A673 (cell line): ENCODE measurements at regions of chr10 and their contacts with region 1.

Region 1: DNA sequence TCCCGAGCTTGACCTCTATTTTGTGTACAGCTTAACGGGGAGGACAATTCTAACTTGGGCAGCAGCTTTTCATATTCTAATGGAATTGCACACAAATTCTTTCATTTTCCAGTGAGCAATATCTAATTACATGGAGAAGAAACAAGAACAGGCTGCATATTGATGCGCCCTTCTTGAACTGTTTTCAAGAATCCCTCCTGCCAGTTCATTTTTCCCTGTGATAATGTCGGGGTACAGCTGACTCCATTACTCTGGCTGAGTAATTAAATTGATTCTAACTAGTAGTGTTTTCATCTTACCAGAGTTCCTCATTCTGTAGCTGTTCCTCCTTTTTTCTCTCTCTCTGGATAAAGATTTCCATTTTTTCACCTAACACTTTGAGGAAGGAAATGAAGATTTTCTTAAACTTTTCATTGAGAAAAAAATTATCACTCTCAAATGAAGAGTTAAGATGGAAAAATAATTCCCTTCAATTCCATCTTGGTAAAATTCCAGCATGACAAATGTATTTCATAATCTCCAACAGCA is 190.9 kb downstream of the FANK1 start:
- DNase-seq: no peak
- H3K4me3 ChIP-seq: no peak overlapping the region
- H3K27ac ChIP-seq: no peak overlapping the region
- H3K4me1 ChIP-seq: no peaks in the 10 kb centered on the region
- H3K27me3 ChIP-seq: no peaks in the 10 kb centered on the region
- CTCF ChIP-seq: no peak

Region 2: GRCh38 chr10:126101801-126102200 is 14.6 kb after region 1 on chr10:
- CTCF ChIA-PET with region 1: no interaction called
- POLR2A ChIA-PET with region 1: interaction called, 13 read pairs
- intact Hi-C with region 1: no loop called
- DNase-seq: no peak
- H3K4me3 ChIP-seq: no peak overlapping the region
- H3K27ac ChIP-seq: no peak overlapping the region
- H3K4me1 ChIP-seq: no peaks in the 10 kb centered on the region
- H3K27me3 ChIP-seq: no peaks in the 10 kb centered on the region
- CTCF ChIP-seq: no peak

Region 3: DNA sequence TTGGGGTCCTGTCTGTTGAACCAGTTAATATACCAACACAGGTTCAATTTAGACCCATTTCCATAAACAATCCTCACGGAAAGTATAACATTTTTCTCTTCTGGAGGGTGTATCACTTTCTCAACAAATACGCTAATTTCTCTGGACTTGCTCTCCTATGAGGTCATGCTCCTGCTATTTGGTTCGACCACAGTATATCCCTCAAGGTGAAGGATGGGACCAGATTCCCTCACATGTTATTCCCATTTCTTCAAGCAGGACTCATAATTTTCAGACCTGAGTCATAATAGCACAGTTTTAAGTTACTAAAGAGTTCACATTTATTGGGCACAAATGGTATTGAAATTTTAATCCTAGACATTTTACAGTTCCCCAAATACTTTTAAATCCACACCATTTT is 243.9 kb after region 1 on chr10:
- CTCF ChIA-PET with region 1: no interaction called
- POLR2A ChIA-PET with region 1: no interaction called
- intact Hi-C with region 1: no loop called
- DNase-seq: no peak
- H3K4me3 ChIP-seq: no peak overlapping the region
- H3K27ac ChIP-seq: no peak overlapping the region
- H3K4me1 ChIP-seq: no peaks in the 10 kb centered on the region
- H3K27me3 ChIP-seq: peaks cover 8% of the 10 kb centered on the region
- CTCF ChIP-seq: no peak